Activated T-helper 1 cell treated with anti-CD3 and anti-CD28 coated beads, Interleukin-12 subunit alpha, Interleukin-12 subunit beta, Interleukin-2, Interleukin-4 antibody, amounts not matched to agents 30 ng/mL and 10 ng/mL and 1 ng/mL, durations not matched to agents 14 hours and 24 hours and 36 hours (primary cell): ENCODE measurements at regions of chr6 and their contacts with region 1.

Region 1: DNA sequence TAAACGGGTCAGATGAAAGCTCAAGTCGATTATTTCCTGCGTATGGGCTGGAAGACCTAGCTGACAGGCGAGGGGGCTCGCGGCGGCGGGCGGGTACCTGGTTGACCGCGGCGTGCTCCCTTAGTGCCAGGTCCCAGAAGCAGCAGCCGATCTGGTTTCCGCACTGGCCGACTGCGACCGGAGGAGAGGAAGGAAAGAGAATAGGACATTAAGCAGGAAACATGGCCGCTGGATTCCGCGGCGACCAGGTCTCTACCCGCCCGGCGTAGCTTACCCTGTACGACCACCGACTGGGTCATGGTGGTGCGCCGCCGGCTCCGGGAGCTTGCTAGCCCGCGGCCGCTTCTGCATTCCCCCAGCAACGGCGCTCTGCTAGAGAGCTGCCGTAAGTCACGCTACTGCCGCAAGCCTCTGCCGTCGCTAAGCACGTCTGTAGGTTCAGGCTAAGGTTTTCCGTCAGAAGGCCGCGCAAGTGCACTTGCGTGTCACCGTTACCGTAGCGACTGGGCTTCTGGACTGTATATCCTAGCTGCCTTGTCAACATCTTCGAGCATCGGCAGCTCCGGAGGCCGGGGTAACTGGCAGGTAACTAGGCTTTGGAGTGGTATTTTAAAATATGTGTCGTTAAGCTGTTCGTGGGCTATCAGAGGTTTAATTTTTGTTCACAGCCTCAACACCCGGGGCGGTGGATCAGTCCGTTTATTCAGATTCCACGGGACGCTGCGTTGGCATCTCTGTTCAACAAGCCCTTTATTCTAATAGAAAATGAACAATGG is at the starts of genes FAM229B and TUBE1:
- DNase-seq: peak; percentile 86
- H3K4me3 Mint-ChIP-seq: no peak within 1 kb of the TSS
- H3K27ac Mint-ChIP-seq: no peak within 1 kb of the TSS
- H3K4me1 Mint-ChIP-seq: no peaks in the 10 kb centered on the region
- H3K27me3 Mint-ChIP-seq: peaks cover 14% of the 10 kb centered on the region
- total RNA-seq, gene FAM229B: 1.1 and 2.2 TPM in 2 replicates
- total RNA-seq, gene TUBE1: 24.4 and 26.2 TPM in 2 replicates

Region 2: GRCh38 chr6:111605100-111605751 is 482.1 kb before region 1 on chr6:
- intact Hi-C with region 1: loop called (anchors 1 kb)
- DNase-seq: peak; percentile 11
- H3K4me3 Mint-ChIP-seq: peak overlapping the region; percentile 90
- H3K27ac Mint-ChIP-seq: peak overlapping the region; percentile 100
- H3K4me1 Mint-ChIP-seq: peaks cover 56% of the 10 kb centered on the region
- H3K27me3 Mint-ChIP-seq: no peaks in the 10 kb centered on the region

Region 3: DNA sequence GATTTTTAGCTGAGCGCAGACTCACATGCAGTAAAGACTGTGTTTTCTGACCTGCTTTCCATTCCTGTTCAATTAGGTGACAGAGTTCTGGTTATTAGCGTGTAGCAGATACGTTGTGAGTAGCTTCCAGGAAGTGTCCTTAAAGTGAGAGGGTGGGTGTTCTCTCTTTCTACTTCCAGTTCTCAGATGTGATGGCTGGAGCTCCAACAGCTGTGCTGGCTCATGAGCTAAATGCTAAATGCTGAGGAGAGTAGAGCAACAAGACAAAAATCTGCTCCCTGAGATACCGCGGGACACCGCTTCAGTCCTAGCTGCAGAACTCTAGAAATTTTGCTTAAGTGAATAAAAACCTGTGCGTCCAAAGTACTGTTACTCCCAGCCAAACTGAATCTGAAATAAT is 175.9 kb before region 1 on chr6:
- intact Hi-C with region 1: no loop called
- DNase-seq: no peak
- H3K4me3 Mint-ChIP-seq: no peak overlapping the region
- H3K27ac Mint-ChIP-seq: no peak overlapping the region
- H3K4me1 Mint-ChIP-seq: peaks cover 6% of the 10 kb centered on the region
- H3K27me3 Mint-ChIP-seq: no peaks in the 10 kb centered on the region

Region 4: DNA sequence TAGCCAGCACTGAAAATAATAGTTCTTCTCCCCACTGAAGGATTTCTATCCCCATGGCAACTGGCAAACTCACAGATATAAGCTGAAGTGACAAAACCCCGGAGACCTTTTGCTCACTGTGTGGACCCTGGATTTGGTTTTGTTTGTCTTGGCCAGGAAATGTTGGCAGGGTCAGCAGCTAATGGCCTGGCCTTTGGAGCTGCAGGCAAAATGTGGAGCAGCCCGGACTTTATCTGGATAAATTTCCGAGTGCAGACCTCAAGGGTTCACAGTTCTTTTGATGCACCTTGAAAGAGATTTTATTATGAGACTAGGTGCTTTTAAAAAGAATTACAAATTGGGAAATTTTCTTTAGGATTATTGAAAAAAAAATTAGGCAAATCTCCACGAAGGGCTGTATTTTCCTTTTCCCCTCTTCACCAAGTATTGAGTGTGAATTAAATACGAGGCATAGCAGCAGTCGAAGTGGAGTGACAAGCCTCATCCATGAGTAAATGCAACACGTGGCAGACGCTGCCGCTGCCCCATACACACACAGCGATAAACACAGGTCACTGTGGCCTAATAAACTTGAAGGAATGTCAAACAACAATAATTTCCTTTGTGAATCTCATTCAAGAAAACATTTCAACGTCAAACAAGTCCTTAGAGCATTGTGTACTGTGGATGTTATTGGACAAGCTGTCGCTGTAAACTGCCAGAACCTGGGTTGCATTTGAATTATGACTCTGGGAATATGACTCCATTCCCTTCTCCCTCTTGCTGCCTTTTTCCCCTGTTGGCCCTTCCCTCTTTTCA is 68.5 kb before region 1 on chr6:
- intact Hi-C with region 1: loop called (anchors 1 kb)
- DNase-seq: no peak
- H3K4me3 Mint-ChIP-seq: no peak overlapping the region
- H3K27ac Mint-ChIP-seq: no peak overlapping the region
- H3K4me1 Mint-ChIP-seq: peaks cover 50% of the 10 kb centered on the region
- H3K27me3 Mint-ChIP-seq: no peaks in the 10 kb centered on the region

Region 5: GRCh38 chr6:112061605-112062004 is 25.7 kb before region 1 on chr6:
- intact Hi-C with region 1: no loop called
- DNase-seq: no peak
- H3K4me3 Mint-ChIP-seq: no peak overlapping the region
- H3K27ac Mint-ChIP-seq: no peak overlapping the region
- H3K4me1 Mint-ChIP-seq: no peaks in the 10 kb centered on the region
- H3K27me3 Mint-ChIP-seq: no peaks in the 10 kb centered on the region

Region 6: GRCh38 chr6:112153926-112154607 is 66.7 kb after region 1 on chr6:
- intact Hi-C with region 1: loop called (anchors 2 kb)
- DNase-seq: no peak
- H3K4me3 Mint-ChIP-seq: no peak overlapping the region
- H3K27ac Mint-ChIP-seq: no peak overlapping the region
- H3K4me1 Mint-ChIP-seq: peaks cover 23% of the 10 kb centered on the region
- H3K27me3 Mint-ChIP-seq: peaks cover 20% of the 10 kb centered on the region

Region 7: DNA sequence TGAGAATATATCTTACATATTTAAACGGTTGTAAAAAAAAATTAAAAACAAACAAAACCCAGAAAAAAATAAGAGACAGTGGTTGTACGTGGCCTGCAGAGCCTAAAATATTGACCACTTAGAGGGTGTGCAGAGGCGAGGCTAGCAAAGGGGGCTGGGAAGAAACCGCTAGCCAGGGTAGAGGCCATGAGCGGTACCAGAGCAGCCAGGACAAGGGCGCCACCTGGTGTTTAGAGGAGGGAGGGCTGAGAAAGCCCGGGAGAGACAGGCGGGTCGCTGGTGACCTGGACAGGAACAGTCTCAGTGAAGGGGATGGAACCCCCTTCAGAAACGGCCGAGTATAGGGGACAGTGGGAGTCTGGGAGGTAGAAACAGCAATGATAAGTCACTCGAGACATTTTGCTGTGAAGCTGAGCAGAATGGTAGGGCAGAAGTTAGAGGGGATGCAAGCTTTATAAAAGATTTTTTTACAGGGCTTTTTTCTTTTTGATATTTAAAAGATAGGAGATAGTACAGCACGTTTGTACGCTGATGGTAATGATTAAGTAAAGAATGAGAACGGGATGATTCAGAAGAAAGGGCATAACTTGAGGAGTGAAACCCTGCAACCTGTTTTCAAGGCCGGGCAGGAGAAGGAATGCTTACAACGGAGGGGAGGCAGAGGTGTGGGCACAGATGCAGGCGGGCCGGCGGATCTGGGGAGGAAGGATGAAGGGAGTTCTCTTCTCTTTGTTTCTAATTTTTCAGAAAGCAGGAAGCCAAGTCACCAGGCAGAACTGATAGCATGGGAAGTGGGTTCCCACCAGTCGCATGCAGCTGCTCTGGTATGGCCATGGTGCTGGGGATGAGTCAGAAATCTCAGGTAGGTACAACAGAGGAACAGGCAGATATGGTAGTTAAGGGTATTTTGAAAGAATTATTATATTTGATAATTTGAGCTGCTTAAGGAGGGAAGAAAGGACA is 76.3 kb after region 1 on chr6:
- intact Hi-C with region 1: loop called (anchors 1 kb)
- DNase-seq: peak; percentile 54
- H3K4me3 Mint-ChIP-seq: peak overlapping the region; percentile 53
- H3K27ac Mint-ChIP-seq: no peak overlapping the region
- H3K4me1 Mint-ChIP-seq: peaks cover 12% of the 10 kb centered on the region
- H3K27me3 Mint-ChIP-seq: peaks cover 51% of the 10 kb centered on the region

Region 8: DNA sequence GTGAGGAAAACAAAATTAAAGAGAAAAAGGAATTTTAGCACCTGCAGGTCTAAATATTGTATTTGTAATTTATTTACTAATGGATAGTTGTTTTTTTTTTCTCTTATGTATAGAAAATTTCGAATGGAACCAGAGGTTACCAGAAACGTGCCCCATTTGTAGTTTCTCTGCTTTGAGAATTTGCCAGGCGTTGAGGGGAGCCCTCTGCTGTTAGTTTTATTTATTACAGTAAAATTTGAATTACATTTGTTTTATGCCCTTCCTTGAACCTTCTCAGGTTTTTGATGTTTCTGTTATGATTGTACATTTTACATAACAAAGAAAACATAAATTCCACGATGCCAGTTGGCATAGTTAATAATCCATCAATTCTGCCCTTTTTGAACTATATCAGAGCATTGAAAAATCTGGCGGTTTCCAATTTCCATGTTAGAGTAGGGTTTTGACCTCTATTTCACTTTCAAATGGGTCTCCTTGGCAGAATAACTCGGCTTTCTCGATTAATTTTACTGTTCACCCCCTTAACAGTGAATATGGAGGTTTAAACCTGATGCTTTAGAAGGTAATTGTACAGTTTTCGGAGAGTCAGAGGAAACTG is 224.7 kb after region 1 on chr6:
- intact Hi-C with region 1: loop called (anchors 5 kb)
- DNase-seq: no peak
- H3K4me3 Mint-ChIP-seq: no peak overlapping the region
- H3K27ac Mint-ChIP-seq: no peak overlapping the region
- H3K4me1 Mint-ChIP-seq: peaks cover 5% of the 10 kb centered on the region
- H3K27me3 Mint-ChIP-seq: peaks cover 11% of the 10 kb centered on the region